ENCODE measurements at regions of chr16 and their contacts with region 1.

Region 1: DNA sequence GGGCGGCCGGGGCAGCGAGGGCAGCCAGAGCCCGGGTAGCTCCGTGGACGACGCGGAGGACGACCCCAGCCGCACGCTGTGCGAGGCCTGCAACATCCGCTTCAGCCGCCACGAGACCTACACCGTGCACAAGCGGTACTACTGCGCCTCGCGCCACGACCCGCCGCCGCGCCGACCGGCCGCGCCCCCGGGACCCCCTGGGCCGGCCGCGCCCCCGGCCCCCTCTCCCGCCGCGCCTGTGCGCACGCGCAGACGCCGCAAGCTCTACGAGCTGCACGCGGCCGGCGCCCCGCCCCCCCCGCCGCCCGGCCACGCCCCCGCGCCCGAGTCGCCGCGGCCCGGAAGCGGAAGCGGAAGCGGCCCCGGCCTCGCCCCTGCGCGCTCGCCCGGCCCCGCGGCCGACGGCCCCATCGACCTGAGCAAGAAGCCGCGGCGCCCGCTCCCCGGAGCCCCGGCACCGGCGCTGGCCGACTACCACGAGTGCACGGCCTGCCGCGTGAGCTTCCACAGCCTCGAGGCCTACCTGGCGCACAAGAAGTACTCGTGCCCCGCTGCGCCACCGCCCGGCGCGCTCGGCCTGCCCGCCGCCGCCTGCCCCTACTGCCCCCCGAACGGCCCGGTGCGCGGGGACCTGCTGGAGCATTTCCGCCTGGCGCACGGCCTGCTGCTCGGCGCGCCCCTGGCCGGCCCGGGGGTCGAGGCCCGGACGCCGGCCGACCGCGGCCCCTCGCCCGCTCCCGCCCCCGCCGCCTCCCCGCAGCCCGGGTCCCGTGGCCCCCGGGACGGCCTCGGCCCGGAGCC is 36.1 kb upstream of the ZC3H18 start:
- DNase-seq: peak; percentile 97
- CTCF ChIP-seq: no peak

Region 2: GRCh38 chr16:88442727-88443576 is 91.2 kb before region 1 on chr16:
- in situ Hi-C with region 1: loop called (anchors 25 kb)
- DNase-seq: peak; percentile 95
- CTCF ChIP-seq: peak; percentile 96

Region 3: GRCh38 chr16:88628512-88628974 is 94.4 kb after region 1 on chr16:
- in situ Hi-C with region 1: no loop called
- DNase-seq: no peak
- CTCF ChIP-seq: peak; percentile 29

Measured in GM13976 (cell line).